HepG2 (cell line): ENCODE measurements at regions of chr6 and their contacts with region 1.

Region 1: GRCh38 chr6:63391203-63391970 is 71.6 kb upstream of the LGSN start:
- DNase-seq: peak; percentile 99
- ATAC-seq: peak; percentile 95
- H3K4me3 ChIP-seq: no peak overlapping the region
- H3K27ac ChIP-seq: peak overlapping the region; percentile 83
- H3K4me1 ChIP-seq: peaks cover 56% of the 10 kb centered on the region
- H3K27me3 ChIP-seq: no peaks in the 10 kb centered on the region
- CTCF ChIP-seq: no peak
- EP300 ChIP-seq: peak; percentile 34 to 99; a peak in 2 of 4 replicates
- POLR2A ChIP-seq: 0 out of 4 replicates have a peak, but pooled peaks of 1 of the 2 experiments have one; percentile 18
- RAD21 ChIP-seq: peak; percentile 63

Region 2: GRCh38 chr6:63121166-63121565 is 270.2 kb before region 1 on chr6:
- CTCF ChIA-PET with region 1: no interaction called
- POLR2A ChIA-PET with region 1: no interaction called
- in situ Hi-C with region 1: no loop called
- intact Hi-C with region 1: no loop called
- DNase-seq: peak; percentile 19
- ATAC-seq: peak; percentile 97
- H3K4me3 ChIP-seq: no peak overlapping the region
- H3K27ac ChIP-seq: no peak overlapping the region
- H3K4me1 ChIP-seq: no peaks in the 10 kb centered on the region
- H3K27me3 ChIP-seq: no peaks in the 10 kb centered on the region
- CTCF ChIP-seq: peak; percentile 53
- EP300 ChIP-seq: no peak
- POLR2A ChIP-seq: no peak
- RAD21 ChIP-seq: no peak

Region 3: DNA sequence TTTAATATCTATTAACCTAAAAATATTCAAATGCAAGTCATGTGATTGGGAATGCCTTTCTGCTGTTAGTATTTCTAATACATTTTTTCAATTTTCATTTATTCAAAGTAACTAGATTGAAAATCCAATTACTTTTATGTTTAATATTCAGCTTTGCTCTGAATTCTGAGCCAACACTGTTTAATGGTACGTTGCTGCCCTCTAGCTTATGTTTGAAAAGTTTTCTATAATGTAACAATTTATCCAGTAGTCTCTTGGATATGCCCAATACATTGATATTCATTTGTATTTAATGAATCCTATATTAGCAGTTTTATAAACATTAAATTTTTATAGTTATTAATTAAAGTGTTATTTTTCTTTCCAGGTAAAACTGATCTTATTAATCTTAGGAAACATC is 119.0 kb before region 1 on chr6:
- CTCF ChIA-PET with region 1: no interaction called
- POLR2A ChIA-PET with region 1: no interaction called
- in situ Hi-C with region 1: no loop called
- intact Hi-C with region 1: no loop called
- DNase-seq: peak; percentile 51
- ATAC-seq: peak; percentile 69; the same call in 2 of the 3 replicates
- H3K4me3 ChIP-seq: no peak overlapping the region
- H3K27ac ChIP-seq: no peak overlapping the region
- H3K4me1 ChIP-seq: no peaks in the 10 kb centered on the region
- H3K27me3 ChIP-seq: no peaks in the 10 kb centered on the region; a peak in 1 of 5 replicates
- CTCF ChIP-seq: peak; percentile 66
- EP300 ChIP-seq: no peak
- POLR2A ChIP-seq: no peak
- RAD21 ChIP-seq: no peak

Region 4: GRCh38 chr6:63410435-63411426 is 19.3 kb after region 1 on chr6:
- CTCF ChIA-PET with region 1: no interaction called
- POLR2A ChIA-PET with region 1: interaction called, 10 read pairs
- in situ Hi-C with region 1: no loop called
- intact Hi-C with region 1: no loop called
- DNase-seq: peak; percentile 84
- ATAC-seq: peak; percentile 96
- H3K4me3 ChIP-seq: peak overlapping the region; percentile 23 to 51 (median 25); a peak in 5 of 6 replicates
- H3K27ac ChIP-seq: peak overlapping the region; percentile 74
- H3K4me1 ChIP-seq: peaks cover 21% of the 10 kb centered on the region
- H3K27me3 ChIP-seq: no peaks in the 10 kb centered on the region
- CTCF ChIP-seq: no peak
- EP300 ChIP-seq: peak in 1 of 2 experiments; percentile 74; a peak in 2 of 4 replicates
- POLR2A ChIP-seq: no peak
- RAD21 ChIP-seq: no peak

Region 5: DNA sequence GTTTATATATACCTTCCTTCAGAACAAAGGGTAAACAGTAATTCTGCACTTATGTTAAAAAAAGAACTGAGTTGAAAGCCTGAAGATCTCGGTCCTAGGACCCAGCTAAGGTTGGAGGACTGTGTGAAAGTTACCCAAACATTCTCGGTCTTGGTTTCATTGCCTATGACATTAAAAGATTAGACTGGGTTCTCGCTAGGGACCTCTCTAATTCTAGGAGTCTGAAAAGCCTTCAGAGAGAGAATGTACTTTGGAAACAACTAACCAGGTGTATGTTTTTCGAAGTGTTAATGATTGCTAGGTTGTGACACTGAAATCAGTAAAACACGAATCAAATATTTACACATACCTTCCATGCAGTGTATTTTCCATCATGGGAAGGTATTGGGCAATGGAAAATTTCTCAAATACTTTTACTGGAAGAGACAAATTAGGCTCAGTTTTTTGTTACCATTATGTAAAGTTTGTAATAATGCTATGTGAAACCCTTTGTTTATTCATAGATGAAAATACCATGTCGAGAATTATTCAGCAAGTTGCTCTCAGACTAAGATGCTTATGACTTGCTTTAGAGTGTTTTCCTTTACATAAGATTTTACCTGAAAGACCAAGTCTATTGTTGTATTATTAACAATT is 67.2 kb after region 1 on chr6:
- CTCF ChIA-PET with region 1: no interaction called
- POLR2A ChIA-PET with region 1: interaction called, 7 read pairs
- in situ Hi-C with region 1: no loop called
- intact Hi-C with region 1: loop called (anchors 1 kb)
- DNase-seq: peak; percentile 99
- ATAC-seq: peak; percentile 99
- H3K4me3 ChIP-seq: peak overlapping the region in 2 of 3 experiments; percentile 13 to 14; a peak in 2 of 6 replicates
- H3K27ac ChIP-seq: peak overlapping the region; percentile 96
- H3K4me1 ChIP-seq: peaks cover 89% of the 10 kb centered on the region
- H3K27me3 ChIP-seq: no peaks in the 10 kb centered on the region
- CTCF ChIP-seq: no peak
- EP300 ChIP-seq: peak; percentile 99 to 100
- POLR2A ChIP-seq: peak; percentile 53 to 81; a peak in 3 of 4 replicates
- RAD21 ChIP-seq: no peak